B cell (primary cell): ENCODE measurements at regions of chr6 and their contacts with region 1.

Region 1: GRCh38 chr6:98947351-98948292 is at the start of gene FBXL4:
- DNase-seq: peak; percentile 88
- ATAC-seq: peak; percentile 83
- H3K4me3 ChIP-seq: peak within 1 kb of the TSS; percentile 72 to 93 (median 76)
- H3K4me3 Mint-ChIP-seq: peak within 1 kb of the TSS; percentile 91
- H3K27ac ChIP-seq: peak within 1 kb of the TSS; percentile 71 to 79
- H3K27ac Mint-ChIP-seq: peak within 1 kb of the TSS; percentile 93
- H3K4me1 ChIP-seq: peaks cover 26 to 27% of the 10 kb centered on the region in 2 donors
- H3K4me1 Mint-ChIP-seq: peaks cover 30% of the 10 kb centered on the region
- H3K27me3 ChIP-seq: no peaks in the 10 kb centered on the region
- H3K27me3 Mint-ChIP-seq: peaks cover 3% of the 10 kb centered on the region
- CTCF ChIP-seq: no peak
- total RNA-seq, gene FBXL4: 22.0 and 22.5 TPM in 2 replicates

Region 2: DNA sequence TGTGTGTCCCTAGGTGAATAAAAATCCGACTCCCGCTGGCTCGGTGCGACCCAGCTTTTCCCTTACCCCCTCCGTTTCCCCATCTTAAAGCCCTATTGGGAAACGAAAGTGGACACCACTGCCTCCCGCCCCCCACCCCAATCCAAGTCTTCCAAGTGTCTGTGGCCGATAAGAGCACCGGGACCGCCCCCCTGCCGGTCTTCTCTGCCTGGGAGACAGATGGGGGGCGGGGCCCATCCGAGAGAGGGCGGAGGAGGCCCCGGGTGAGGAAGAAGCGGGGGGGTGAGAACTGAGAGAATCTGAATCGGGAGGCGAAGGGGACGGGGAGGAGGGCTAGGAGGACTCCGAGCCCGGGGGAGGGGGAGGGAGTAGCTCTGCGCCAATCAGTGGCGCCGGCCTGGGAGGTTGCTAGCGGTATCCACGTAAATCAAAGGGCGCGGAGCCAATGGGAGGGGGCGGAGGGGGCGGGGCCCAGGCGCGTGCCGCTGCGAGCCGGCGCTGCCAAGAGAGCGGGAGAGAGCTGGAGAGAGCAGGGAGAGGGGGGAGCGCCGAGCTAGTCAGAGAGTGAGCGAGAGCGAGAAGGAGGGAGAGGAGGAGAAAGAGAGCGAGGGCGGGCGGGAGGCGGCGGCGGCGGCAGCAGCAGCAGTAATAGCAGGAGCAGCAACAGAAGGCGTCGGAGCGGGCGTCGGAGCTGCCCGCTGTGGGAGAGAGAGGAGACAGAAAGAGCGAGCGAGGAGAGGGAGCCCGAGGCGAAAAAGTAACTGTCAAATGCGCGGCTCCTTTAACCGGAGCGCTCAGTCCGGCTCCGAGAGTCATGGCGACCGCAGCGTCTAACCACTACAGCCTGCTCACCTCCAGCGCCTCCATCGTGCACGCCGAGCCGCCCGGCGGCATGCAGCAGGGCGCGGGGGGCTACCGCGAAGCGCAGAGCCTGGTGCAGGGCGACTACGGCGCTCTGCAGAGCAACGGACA is 113.3 kb before region 1 on chr6 and contains the start of gene POU3F2:
- CTCF ChIA-PET with region 1: no interaction called
- POLR2A ChIA-PET with region 1: no interaction called
- intact Hi-C with region 1: loop called (anchors 1 kb)
- DNase-seq: peak; percentile 79
- ATAC-seq: peak; percentile 86
- H3K4me3 ChIP-seq: peak within 1 kb of the TSS; percentile 48 to 82 (median 59)
- H3K4me3 Mint-ChIP-seq: peak within 1 kb of the TSS; percentile 92
- H3K27ac ChIP-seq: no peak within 1 kb of the TSS
- H3K27ac Mint-ChIP-seq: peak within 1 kb of the TSS; percentile 63
- H3K4me1 ChIP-seq: peaks cover 49 to 60% of the 10 kb centered on the region in 2 donors
- H3K4me1 Mint-ChIP-seq: peaks cover 45% of the 10 kb centered on the region
- H3K27me3 ChIP-seq: peaks cover 0 to 81% (median 69%) of the 10 kb centered on the region in 4 experiments
- H3K27me3 Mint-ChIP-seq: peaks cover 77% of the 10 kb centered on the region
- CTCF ChIP-seq: no peak
- total RNA-seq, gene POU3F2: not detected in 2 replicates

Region 3: DNA sequence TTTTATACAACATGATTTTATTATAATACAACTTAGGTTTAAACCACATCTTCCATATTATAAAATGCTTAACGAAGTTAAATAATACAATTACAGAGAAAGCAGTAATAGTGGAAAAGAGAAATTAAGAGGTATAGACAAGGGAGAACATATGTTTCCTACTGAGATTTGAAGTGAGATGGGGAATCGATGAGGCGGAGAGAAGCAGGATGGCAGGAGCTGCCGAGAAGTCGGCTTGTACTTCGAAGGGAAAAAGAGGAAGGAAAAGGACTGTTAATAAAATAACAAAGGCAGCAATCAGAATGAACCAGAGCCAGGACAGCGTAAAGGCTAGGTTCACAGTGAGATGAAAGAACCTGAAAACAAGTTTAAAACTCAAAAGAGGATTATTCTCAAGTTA is 15.2 kb before region 1 on chr6:
- CTCF ChIA-PET with region 1: no interaction called
- POLR2A ChIA-PET with region 1: no interaction called
- intact Hi-C with region 1: loop called (anchors 2 kb)
- DNase-seq: peak; percentile 15
- ATAC-seq: no peak
- H3K4me3 ChIP-seq: no peak overlapping the region
- H3K4me3 Mint-ChIP-seq: peak overlapping the region; percentile 27
- H3K27ac ChIP-seq: no peak overlapping the region
- H3K27ac Mint-ChIP-seq: peak overlapping the region; percentile 7
- H3K4me1 ChIP-seq: peaks cover 9 to 21% of the 10 kb centered on the region in 2 donors
- H3K4me1 Mint-ChIP-seq: peaks cover 47% of the 10 kb centered on the region
- H3K27me3 ChIP-seq: no peaks in the 10 kb centered on the region
- H3K27me3 Mint-ChIP-seq: no peaks in the 10 kb centered on the region
- CTCF ChIP-seq: no peak

Region 4: DNA sequence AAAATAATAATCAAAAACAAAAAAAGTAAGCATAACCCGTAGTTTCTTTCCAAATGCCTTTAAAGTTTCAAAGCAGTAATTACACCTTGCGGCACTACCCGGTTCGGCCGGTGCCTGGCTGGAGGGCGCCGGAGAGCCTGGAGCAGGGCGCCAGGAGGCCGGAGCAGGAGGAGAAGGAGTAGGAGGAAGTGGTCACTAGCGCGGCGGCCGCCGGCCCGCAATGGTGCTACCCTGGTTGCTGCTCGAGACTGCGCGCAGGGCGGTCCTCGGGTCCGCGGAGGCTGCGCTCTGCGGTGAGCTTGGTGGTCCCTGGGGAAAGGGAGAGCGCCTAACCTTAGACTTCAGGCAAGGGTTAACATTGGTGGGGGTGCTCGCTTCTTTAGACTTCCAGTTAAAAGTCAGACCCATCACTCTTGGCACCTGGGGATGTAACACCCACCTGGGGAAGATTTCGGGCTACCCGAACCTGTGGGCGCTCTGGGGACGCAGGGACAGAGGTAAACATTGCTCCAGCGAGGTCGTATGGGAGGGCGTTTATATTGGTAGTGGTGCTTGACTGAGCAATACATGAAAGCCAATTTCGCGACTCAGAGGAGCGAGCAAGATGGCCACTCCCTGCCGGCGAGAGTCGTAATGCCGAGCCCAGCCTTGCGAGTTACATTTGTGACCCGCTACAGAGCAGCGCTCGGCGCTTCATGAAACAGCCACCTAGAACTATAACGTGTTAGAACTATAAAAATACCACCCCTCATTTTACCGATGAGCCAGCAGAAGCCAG is 573.4 kb after region 1 on chr6:
- CTCF ChIA-PET with region 1: no interaction called
- POLR2A ChIA-PET with region 1: no interaction called
- intact Hi-C with region 1: loop called (anchors 5 kb)
- DNase-seq: peak; percentile 79
- ATAC-seq: peak; percentile 86
- H3K4me3 ChIP-seq: peak overlapping the region; percentile 77 to 97 (median 79)
- H3K4me3 Mint-ChIP-seq: peak overlapping the region; percentile 99
- H3K27ac ChIP-seq: peak overlapping the region; percentile 54 to 62
- H3K27ac Mint-ChIP-seq: peak overlapping the region; percentile 98
- H3K4me1 ChIP-seq: peaks cover 11 to 15% of the 10 kb centered on the region in 2 donors
- H3K4me1 Mint-ChIP-seq: peaks cover 39% of the 10 kb centered on the region
- H3K27me3 ChIP-seq: no peaks in the 10 kb centered on the region
- H3K27me3 Mint-ChIP-seq: no peaks in the 10 kb centered on the region
- CTCF ChIP-seq: peak; percentile 96